Prostate gland (tissue), 2 donors: ENCODE measurements at regions of chr14 and their contacts with region 1.

Region 1: GRCh38 chr14:55026793-55027561 is at the starts of genes SOCS4 and WDHD1:
- DNase-seq: peak; percentile 92
- H3K4me3 ChIP-seq: peak within 1 kb of the TSS; percentile 58 to 74
- H3K27ac ChIP-seq: peak within 1 kb of the TSS; percentile 70 to 75
- H3K4me1 ChIP-seq: no peaks in the 10 kb centered on the region
- H3K27me3 ChIP-seq: no peaks in the 10 kb centered on the region
- CTCF ChIP-seq: peak in 2 of 4 experiments; percentile 40 to 47
- POLR2A ChIP-seq: peak; percentile 65
- total RNA-seq, gene SOCS4: 8.2 to 9.7 TPM
- total RNA-seq, gene WDHD1: 3.0 to 5.1 TPM

Region 2: DNA sequence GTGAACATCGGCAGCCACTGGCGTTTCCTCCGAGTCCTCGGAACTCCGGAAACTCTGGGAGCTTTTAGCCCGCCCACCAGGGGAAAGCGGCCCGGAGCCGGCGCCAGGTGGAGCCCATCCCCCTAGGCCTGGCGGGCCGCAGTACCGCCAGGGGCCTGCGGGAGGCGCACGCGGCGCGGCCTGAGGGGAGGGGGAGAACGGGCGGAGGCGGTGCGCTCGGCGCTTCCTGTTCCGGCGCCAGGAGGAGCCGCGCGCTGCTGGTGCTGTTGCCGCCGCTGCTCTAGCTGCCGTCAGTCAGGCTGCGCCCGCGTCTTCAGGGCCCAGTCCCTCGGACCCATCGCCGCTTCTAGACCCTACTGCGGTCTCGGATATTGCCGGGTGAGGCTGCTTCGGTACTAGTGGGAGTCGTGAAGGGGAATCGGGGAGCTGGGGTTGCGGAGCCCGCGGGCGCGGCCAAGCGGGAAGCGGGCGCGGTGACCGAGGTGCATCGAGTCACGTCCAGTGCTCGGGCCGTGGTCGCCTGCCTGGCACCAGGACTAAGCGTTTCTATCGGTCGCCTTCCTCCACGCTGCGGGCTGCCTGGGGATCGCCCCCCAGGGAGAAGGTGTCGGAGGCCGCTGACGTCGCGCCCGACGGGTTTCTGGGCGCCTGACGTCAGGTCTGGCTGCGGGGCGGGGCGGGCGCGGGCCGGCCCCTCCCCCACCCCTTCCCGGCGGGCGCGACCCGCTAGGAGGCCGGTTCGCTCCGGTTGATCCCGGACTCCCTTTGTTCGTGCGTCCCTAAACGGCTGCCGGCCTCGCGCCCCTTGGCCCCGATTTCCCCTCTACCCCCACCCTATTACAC is 24.7 kb after region 1 on chr14 and contains the start of gene MAPK1IP1L:
- intact Hi-C with region 1: loop called (anchors 2 kb)
- DNase-seq: peak; percentile 84
- H3K4me3 ChIP-seq: peak within 1 kb of the TSS; percentile 85 to 97
- H3K27ac ChIP-seq: peak within 1 kb of the TSS; percentile 99 to 100
- H3K4me1 ChIP-seq: peaks cover 5% of the 10 kb centered on the region
- H3K27me3 ChIP-seq: no peaks in the 10 kb centered on the region
- CTCF ChIP-seq: peak; percentile 99 to 100 (median 100)
- POLR2A ChIP-seq: peak; percentile 96
- total RNA-seq, gene MAPK1IP1L: 51.3 to 137 TPM

Region 3: DNA sequence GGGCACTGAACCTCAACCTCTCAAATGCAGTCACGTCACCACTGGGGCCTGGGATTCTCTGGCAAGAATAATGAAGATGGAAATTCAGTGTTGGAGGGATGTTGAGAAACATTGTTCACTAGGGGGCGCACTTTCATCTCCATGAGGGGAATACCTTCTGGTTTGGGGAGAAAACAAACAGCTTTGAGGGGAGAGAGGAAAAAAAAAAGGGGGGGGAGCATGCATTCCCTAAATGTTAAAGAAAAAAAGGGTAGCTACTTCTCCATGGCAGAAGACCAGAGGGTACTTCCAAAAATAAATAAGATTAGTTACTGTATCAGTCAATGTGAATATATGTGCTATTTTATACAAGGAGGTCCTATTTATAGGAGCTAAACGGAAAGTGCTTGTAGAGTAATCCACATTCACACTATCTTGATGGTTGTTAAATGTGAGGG is 419.3 kb after region 1 on chr14:
- intact Hi-C with region 1: no loop called
- DNase-seq: peak; percentile 40
- H3K4me3 ChIP-seq: no peak overlapping the region
- H3K27ac ChIP-seq: no peak overlapping the region
- H3K4me1 ChIP-seq: no peaks in the 10 kb centered on the region
- H3K27me3 ChIP-seq: no peaks in the 10 kb centered on the region
- CTCF ChIP-seq: peak; percentile 50 to 66 (median 56)
- POLR2A ChIP-seq: no peak